ENCODE measurements at regions of chr1 and their contacts with region 1.

Region 1: DNA sequence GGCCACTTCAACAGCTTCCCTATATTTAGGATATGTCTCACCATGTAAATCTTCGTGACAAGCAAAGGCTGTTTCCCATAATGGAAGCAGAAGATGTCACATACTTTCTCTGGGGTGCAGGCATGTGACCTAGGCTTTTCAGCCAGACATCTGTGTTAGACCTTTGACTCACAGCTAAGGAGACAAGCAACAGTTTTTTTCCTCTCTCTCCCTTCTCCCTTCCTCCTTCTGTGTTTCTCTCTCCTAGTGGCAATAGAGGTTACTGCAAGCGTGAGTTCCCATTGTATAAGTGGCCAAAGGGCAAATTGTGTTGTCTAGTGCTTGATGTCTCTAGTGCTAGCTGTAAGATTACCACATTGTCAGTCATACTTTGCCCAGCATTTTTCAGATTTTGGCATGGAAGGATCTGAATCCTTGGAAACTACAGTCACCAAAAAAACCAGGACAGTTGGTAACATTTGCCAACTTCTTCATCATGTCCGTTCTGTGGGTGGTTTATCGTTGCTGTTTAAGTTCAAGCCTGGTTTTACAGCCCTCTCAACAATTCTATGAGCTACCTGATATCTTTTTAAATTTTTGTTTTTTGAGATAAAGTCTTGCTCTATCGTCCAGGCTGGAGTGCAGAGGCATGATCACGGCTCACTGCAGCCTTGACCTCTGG is 44.4 kb upstream of the RABGAP1L start:
- DNase-seq: no peak
- H3K4me3 ChIP-seq: no peak overlapping the region
- H3K27ac ChIP-seq: no peak overlapping the region
- H3K4me1 ChIP-seq: peaks cover 0 to 23% (median 7%) of the 10 kb centered on the region in 4 donors
- H3K27me3 ChIP-seq: no peaks in the 10 kb centered on the region
- CTCF ChIP-seq: peak in 3 of 4 experiments; percentile 25 to 47 (median 26)
- EP300 ChIP-seq: no peak
- POLR2A ChIP-seq: no peak

Region 2: GRCh38 chr1:173301507-173301906 is 813.4 kb before region 1 on chr1:
- intact Hi-C with region 1: no loop called
- DNase-seq: no peak
- H3K4me3 ChIP-seq: no peak overlapping the region
- H3K27ac ChIP-seq: no peak overlapping the region
- H3K4me1 ChIP-seq: peaks cover 0 to 30% (median 14%) of the 10 kb centered on the region in 4 donors
- H3K27me3 ChIP-seq: no peaks in the 10 kb centered on the region
- CTCF ChIP-seq: no peak
- EP300 ChIP-seq: no peak
- POLR2A ChIP-seq: no peak

Region 3: DNA sequence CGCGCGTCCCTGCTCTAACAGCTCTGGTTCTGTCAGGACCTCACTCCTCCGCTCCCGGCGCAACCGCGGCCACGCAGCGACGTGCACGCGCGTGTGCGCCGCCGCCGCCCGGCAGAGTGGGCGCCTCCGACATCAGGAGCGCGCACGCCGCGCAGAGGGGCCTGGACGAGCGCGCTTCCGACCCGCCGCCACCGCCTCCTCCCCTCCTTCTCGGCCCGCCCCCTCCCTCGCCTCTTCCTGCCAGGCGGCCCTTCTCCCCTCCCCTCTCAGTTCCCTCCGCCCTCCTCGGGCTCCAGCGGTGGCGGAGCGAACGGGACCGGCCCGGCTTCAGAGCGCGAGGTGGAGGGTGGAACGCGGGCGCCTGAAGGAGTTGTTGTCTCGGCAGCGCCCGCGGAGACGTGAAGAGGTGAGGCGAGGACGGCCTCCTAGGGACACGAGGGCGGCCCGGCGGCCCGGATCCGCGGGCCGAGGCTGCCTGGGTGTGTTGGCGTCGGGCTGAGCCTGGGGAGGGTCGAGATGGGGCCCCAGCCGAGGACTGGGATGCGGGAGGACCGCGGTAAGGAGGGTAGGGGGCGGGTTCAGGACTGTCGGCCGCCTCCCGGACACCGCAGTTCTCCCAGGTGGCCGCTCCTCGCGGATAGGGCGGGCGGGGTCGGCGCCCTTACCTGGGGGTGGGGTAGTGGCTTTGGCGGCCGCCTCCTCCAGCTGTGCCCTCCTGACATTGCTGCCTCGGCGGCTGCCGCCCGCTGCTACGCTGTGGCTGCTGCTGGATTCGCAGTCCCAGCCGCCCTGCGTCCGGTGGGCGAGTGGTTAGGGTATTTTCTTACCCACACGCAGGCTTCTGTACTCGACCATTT is 44.6 kb after region 1 on chr1 and contains the start of gene RABGAP1L:
- intact Hi-C with region 1: loop called (anchors 2 kb)
- DNase-seq: peak; percentile 96
- H3K4me3 ChIP-seq: peak within 1 kb of the TSS; percentile 80 to 90 (median 84)
- H3K27ac ChIP-seq: peak within 1 kb of the TSS; percentile 86 to 94 (median 90)
- H3K4me1 ChIP-seq: peaks cover 0 to 15% (median 10%) of the 10 kb centered on the region in 4 donors
- H3K27me3 ChIP-seq: no peaks in the 10 kb centered on the region
- CTCF ChIP-seq: no peak
- EP300 ChIP-seq: no peak
- POLR2A ChIP-seq: peak; percentile 74 to 77
- total RNA-seq, gene RABGAP1L: 30.4 to 42.9 (median 36.4) TPM

Region 4: GRCh38 chr1:174297351-174297750 is 182.4 kb after region 1 on chr1:
- intact Hi-C with region 1: no loop called
- DNase-seq: no peak
- H3K4me3 ChIP-seq: no peak overlapping the region
- H3K27ac ChIP-seq: no peak overlapping the region
- H3K4me1 ChIP-seq: peaks cover 0 to 4% (median 0%) of the 10 kb centered on the region in 4 donors
- H3K27me3 ChIP-seq: no peaks in the 10 kb centered on the region
- CTCF ChIP-seq: no peak
- EP300 ChIP-seq: no peak
- POLR2A ChIP-seq: no peak

Measured in sigmoid colon (tissue), 7 donors.